B cell (primary cell): ENCODE measurements at regions of chr5 and their contacts with region 1.

Region 1: GRCh38 chr5:157558041-157558595 is 17.5 kb downstream of the ADAM19 start:
- DNase-seq: no peak
- ATAC-seq: no peak
- H3K4me3 ChIP-seq: no peak overlapping the region
- H3K4me3 Mint-ChIP-seq: peak overlapping the region; percentile 23
- H3K27ac ChIP-seq: peak overlapping the region; percentile 30 to 69
- H3K27ac Mint-ChIP-seq: peak overlapping the region; percentile 85
- H3K4me1 ChIP-seq: peaks cover 84 to 87% of the 10 kb centered on the region in 2 donors
- H3K4me1 Mint-ChIP-seq: peaks cover 90% of the 10 kb centered on the region
- H3K27me3 ChIP-seq: no peaks in the 10 kb centered on the region
- H3K27me3 Mint-ChIP-seq: no peaks in the 10 kb centered on the region
- CTCF ChIP-seq: no peak

Region 2: DNA sequence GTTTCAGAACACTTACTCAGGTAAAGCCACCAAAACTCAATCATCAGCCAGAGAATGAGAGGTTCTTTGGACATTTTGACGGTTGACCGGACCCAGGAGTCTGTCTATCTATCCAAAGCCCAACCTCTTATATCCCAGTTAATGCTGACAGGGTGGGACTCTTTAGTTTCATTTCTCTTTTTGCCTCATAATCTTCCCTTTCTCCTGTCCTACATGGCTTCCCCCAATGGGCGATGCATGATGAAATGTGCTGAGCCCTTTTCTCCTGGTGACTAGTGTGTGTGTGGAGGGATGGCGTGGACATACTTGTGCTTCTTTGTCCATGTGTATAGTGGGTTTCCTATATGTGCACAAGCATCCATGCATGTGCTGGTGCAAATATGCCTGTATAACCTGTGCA is 595.0 kb before region 1 on chr5 and contains the start of gene TIMD4:
- CTCF ChIA-PET with region 1: no interaction called
- POLR2A ChIA-PET with region 1: no interaction called
- intact Hi-C with region 1: no loop called
- DNase-seq: no peak
- ATAC-seq: no peak
- H3K4me3 ChIP-seq: no peak within 1 kb of the TSS
- H3K4me3 Mint-ChIP-seq: no peak within 1 kb of the TSS
- H3K27ac ChIP-seq: no peak within 1 kb of the TSS
- H3K27ac Mint-ChIP-seq: no peak within 1 kb of the TSS
- H3K4me1 ChIP-seq: peaks cover 0 to 6% of the 10 kb centered on the region in 2 donors
- H3K4me1 Mint-ChIP-seq: peaks cover 6% of the 10 kb centered on the region
- H3K27me3 ChIP-seq: peaks cover 0 to 3% (median 0%) of the 10 kb centered on the region in 4 experiments
- H3K27me3 Mint-ChIP-seq: peaks cover 4% of the 10 kb centered on the region
- CTCF ChIP-seq: no peak
- total RNA-seq, gene TIMD4: not detected in 2 replicates

Region 3: DNA sequence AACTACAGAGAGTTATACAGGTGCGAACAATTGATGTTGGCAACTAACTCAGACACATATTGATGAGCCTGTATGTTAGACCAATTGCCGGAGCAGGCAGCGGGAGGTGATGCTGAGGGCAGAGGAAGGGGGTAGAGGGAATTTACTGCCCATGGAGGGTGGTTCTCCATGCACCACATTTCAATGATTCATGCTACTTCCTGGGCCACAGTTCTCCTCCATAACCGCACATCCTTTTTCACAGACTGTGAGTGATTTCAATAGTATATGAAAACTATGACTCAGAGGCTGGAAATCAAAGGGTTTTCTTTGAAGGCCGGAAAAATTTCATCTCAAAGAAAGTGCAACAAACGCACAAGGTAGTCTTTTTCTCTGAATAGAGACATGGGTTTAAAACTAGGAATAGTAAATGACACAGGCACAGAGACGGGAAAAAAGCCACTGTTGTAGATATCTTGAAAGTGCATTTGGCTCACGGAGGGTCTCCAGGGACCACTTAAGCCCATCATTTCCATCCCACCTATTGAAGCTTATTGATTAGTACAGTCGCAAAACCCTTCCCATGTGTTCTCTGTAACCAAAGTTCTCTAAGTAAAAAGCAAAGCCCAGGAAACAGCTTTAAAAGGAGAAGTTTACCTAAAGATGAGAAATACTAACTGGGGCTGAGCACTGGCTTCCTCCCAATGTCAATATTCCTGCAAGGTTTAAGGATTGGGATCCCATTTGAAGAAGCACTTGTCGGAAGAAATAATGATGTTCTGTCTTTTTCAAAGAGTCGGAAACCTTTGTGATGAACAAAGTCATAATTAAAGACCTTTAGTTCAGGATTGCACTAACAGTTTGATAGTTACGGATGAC is 45.4 kb after region 1 on chr5:
- CTCF ChIA-PET with region 1: no interaction called
- POLR2A ChIA-PET with region 1: interaction called, 11 read pairs
- intact Hi-C with region 1: no loop called
- DNase-seq: peak; percentile 38
- ATAC-seq: peak; percentile 14
- H3K4me3 ChIP-seq: no peak overlapping the region
- H3K4me3 Mint-ChIP-seq: peak overlapping the region; percentile 20
- H3K27ac ChIP-seq: peak overlapping the region; percentile 65 to 77
- H3K27ac Mint-ChIP-seq: peak overlapping the region; percentile 81
- H3K4me1 ChIP-seq: peaks cover 71 to 73% of the 10 kb centered on the region in 2 donors
- H3K4me1 Mint-ChIP-seq: peaks cover 73% of the 10 kb centered on the region
- H3K27me3 ChIP-seq: no peaks in the 10 kb centered on the region
- H3K27me3 Mint-ChIP-seq: no peaks in the 10 kb centered on the region
- CTCF ChIP-seq: no peak